AG04450 (cell line): ENCODE measurements at regions of chr19 and their contacts with region 1.

Region 1: GRCh38 chr19:4278419-4279266 is at the start of gene SHD:
- DNase-seq: no peak
- H3K4me3 ChIP-seq: 0 out of 2 replicates have a peak within 1 kb of the TSS, but pooled peaks have one; percentile 13
- H3K27ac ChIP-seq: no peak within 1 kb of the TSS
- H3K27me3 ChIP-seq: peaks cover 31% of the 10 kb centered on the region
- CTCF ChIP-seq: no peak
- polyA plus RNA-seq, gene SHD: not detected in 2 replicates

Region 2: DNA sequence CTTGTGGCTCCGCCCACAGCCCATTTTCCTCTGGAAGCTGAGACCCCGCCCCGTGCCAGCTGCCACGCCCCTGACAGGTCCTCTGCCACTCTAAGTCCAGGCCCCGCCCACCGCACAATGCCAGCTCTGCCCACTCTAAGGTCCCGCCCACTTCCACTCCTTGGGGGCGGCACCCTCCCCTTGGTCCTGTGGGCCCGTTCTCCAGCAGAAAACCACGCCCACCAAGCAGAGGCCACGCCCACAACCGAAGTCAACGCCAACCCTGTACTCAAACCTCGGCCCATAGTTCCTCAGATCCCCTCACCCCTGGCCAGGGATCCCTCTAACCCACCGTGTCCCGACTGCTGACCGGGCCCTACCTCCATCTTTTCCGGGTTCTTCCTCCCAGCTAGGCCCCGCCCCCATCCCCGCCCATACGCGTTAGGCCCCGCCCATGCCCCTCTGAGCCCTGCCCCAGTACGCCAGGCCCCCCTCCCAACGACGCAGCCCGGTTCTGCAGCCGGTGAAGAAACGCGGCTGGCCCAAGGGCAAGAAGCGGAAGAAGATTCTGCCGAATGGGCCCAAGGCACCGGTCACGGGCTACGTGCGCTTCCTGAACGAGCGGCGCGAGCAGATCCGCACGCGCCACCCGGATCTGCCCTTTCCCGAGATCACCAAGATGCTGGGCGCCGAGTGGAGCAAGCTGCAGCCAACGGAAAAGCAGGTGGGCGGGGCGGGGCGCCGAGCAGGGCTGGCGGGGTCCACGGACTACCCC is 704.6 kb before region 1 on chr19:
- CTCF ChIA-PET with region 1: no interaction called
- POLR2A ChIA-PET with region 1: no interaction called
- DNase-seq: peak; percentile 75
- H3K4me3 ChIP-seq: peak overlapping the region; percentile 80
- H3K27ac ChIP-seq: no peak overlapping the region
- H3K27me3 ChIP-seq: no peaks in the 10 kb centered on the region
- CTCF ChIP-seq: no peak

Region 3: DNA sequence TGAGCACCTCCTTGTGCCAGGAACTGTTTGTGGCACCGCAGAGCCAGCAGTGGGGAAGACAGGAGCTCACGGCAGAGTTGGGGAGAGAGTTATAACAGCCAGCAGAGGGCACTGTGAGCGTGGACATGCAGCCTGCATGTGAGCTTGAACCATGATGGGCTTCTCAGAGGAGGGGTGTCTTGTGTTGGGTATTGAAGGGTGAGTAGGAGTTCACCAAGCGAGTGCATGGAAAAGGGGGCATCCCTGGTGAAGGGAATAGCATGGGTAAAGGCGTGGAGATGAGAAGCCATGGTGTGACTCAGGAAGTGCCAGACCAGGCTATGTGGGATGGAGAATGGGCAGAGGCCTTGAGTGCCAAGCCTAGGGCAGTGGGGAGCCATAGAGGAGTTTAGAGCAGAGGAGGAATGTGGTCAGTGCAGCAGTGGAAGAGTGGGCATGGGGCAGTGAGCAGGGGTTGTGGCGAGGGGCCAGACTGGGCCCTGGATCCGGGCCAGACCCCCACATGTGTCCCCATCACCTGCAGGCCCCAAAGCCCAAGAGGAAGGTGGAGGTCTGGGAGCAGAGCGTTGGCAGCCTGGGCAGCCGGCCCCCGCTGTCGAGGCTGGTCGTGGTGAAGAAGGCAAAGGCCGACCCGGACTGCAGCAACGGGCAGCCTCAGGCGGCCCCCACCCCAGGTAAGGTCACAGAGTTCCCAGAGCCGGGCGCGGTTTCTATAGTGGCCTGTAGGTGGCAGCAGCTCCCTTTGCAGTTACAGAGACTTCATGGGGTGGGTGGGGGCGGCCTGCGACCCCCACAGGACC is 11.3 kb before region 1 on chr19:
- CTCF ChIA-PET with region 1: interaction called, 14 read pairs
- POLR2A ChIA-PET with region 1: no interaction called
- DNase-seq: no peak
- H3K4me3 ChIP-seq: no peak overlapping the region
- H3K27ac ChIP-seq: no peak overlapping the region
- H3K27me3 ChIP-seq: no peaks in the 10 kb centered on the region
- CTCF ChIP-seq: peak; percentile 81

Region 4: GRCh38 chr19:4291184-4291732 is 12.6 kb after region 1 on chr19:
- CTCF ChIA-PET with region 1: no interaction called
- POLR2A ChIA-PET with region 1: no interaction called
- DNase-seq: no peak
- H3K4me3 ChIP-seq: no peak overlapping the region
- H3K27ac ChIP-seq: no peak overlapping the region
- H3K27me3 ChIP-seq: peaks cover 4% of the 10 kb centered on the region
- CTCF ChIP-seq: no peak